ENCODE measurements at regions of chr15 and their contacts with region 1.

Region 1: DNA sequence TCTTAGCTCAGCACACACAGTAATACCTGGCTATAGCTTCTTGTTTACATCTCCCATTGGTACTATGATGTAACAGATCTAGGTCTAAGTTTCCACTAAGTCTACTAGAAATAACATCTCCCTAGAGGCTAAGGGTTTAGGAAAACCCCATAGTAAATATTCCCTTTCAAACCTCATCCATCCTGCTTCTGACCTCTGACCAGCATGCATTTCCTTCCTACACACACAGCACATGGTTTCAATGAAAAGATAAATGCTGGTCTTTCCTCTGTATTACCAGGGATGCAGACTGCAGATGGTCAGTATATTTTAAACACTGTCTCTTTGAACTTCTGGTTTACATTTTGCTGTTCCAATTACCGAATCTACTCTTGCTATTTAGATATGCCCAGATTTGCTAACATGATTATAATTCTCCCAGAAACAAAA is 96.6 kb downstream of the EFL1 start:
- DNase-seq: no peak
- H3K4me3 ChIP-seq: no peak overlapping the region
- H3K27ac ChIP-seq: no peak overlapping the region
- H3K4me1 ChIP-seq: no peaks in the 10 kb centered on the region
- H3K27me3 ChIP-seq: no peaks in the 10 kb centered on the region
- CTCF ChIP-seq: no peak
- POLR2A ChIP-seq: no peak

Region 2: GRCh38 chr15:81091889-81092558 is 1073.9 kb before region 1 on chr15:
- intact Hi-C with region 1: loop called (anchors 5 kb)
- DNase-seq: no peak
- H3K4me3 ChIP-seq: no peak overlapping the region
- H3K27ac ChIP-seq: peak overlapping the region; percentile 26 to 50
- H3K4me1 ChIP-seq: no peaks in the 10 kb centered on the region
- H3K27me3 ChIP-seq: no peaks in the 10 kb centered on the region
- CTCF ChIP-seq: no peak
- POLR2A ChIP-seq: no peak

Region 3: DNA sequence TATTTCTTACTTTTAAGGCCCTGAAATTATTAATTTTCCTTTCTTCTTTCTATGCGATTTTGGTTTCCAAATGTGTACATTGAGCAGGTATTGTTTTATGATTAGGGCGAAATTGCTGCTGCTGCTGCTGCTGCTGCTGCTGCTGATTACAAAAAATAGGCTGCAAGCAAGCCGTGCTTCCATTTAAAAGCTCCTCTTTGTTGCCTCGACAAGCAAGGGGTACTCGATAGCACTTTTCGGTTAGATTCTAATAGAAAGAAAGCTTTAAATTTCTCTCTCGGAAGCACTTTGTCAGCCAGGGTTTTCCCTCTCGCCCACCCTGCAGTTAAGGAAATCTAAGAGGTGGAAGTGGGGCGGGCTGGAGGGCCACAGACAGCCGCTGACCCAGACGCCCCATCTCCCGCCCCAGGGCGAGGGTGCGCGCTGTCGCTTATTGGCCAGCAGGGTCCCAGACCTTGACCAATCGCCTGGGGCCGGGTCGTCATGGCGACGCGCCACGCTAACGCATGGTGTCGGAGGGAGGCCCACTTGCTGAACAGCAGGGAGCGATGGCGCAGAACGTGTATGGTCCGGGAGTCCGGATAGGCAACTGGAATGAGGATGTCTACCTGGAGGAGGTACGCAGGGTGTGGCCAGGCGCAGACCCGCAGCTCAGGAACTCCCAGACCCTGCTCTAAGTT is 1032.0 kb before region 1 on chr15 and contains the start of gene CFAP161:
- intact Hi-C with region 1: no loop called
- DNase-seq: peak; percentile 37 to 57
- H3K4me3 ChIP-seq: peak within 1 kb of the TSS; percentile 36 to 54 (median 43)
- H3K27ac ChIP-seq: no peak within 1 kb of the TSS
- H3K4me1 ChIP-seq: no peaks in the 10 kb centered on the region
- H3K27me3 ChIP-seq: no peaks in the 10 kb centered on the region
- CTCF ChIP-seq: no peak
- POLR2A ChIP-seq: no peak
- total RNA-seq, gene CFAP161: 0.66 to 1.0 TPM in 2 of 3 donors, not detected in the other

Measured in breast epithelium (tissue), 4 donors.